Activated T-helper 1 cell treated with anti-CD3 and anti-CD28 coated beads, Interleukin-12 subunit alpha, Interleukin-12 subunit beta, Interleukin-2, Interleukin-4 antibody, amounts not matched to agents 30 ng/mL and 10 ng/mL and 1 ng/mL, durations not matched to agents 14 hours and 24 hours and 36 hours (primary cell): ENCODE measurements at regions of chr11 and their contacts with region 1.

Region 1: DNA sequence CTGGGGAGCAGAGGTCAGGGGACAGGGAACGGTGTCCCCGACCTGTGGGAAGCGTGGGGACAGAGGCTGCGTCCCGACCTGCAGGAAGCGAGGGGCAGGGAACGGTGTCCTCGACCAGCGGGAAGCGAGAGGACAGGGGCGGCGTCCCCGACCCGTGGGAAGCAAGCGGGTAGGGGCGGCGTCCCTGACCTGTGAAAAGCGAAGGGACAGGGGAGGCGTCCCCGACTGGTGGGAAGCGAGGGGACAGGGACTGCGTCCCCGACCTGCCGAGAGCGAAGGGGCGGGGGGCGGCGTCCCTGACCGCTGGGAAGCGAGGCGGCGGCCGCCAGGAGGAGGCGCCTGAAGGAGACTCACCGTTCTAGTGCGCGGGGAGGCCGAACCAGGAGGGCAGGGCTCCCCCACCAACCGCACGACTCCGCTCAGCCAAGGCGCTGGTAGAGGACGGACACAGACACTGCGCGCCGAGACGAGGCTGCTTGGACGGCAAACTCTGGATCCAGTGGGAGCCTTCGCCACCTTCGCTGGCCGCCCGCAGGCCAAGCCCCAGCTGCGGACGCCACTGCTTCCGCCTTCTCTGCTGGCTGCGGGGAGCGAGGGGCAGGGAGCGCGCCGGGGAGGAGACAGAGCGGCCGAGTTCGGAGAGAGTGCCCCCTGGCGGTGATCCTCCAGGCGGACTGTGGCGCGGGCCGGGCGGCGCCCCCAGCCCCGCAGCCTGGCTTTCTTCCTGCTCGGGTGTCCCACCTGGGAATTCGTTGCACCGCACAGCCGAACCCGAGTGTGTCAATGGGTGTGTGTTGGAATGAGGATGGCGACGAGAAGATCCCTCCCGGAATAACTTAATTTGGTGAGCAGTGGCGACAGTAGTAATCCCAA is at the start of gene TRAF6:
- DNase-seq: peak; percentile 83
- H3K4me3 Mint-ChIP-seq: peak within 1 kb of the TSS; percentile 97
- H3K27ac Mint-ChIP-seq: peak within 1 kb of the TSS; percentile 91
- H3K4me1 Mint-ChIP-seq: peaks cover 30% of the 10 kb centered on the region
- H3K27me3 Mint-ChIP-seq: peaks cover 9% of the 10 kb centered on the region
- total RNA-seq, gene TRAF6: 10.5 and 11.1 TPM in 2 replicates

Region 2: GRCh38 chr11:35662649-35663407 is 847.1 kb before region 1 on chr11 and contains the start of gene TRIM44:
- intact Hi-C with region 1: loop called (anchors 2 kb)
- DNase-seq: peak; percentile 79
- H3K4me3 Mint-ChIP-seq: peak within 1 kb of the TSS; percentile 89
- H3K27ac Mint-ChIP-seq: peak within 1 kb of the TSS; percentile 93
- H3K4me1 Mint-ChIP-seq: peaks cover 33% of the 10 kb centered on the region
- H3K27me3 Mint-ChIP-seq: peaks cover 18% of the 10 kb centered on the region
- total RNA-seq, gene TRIM44: 24.3 and 27.6 TPM in 2 replicates

Region 3: DNA sequence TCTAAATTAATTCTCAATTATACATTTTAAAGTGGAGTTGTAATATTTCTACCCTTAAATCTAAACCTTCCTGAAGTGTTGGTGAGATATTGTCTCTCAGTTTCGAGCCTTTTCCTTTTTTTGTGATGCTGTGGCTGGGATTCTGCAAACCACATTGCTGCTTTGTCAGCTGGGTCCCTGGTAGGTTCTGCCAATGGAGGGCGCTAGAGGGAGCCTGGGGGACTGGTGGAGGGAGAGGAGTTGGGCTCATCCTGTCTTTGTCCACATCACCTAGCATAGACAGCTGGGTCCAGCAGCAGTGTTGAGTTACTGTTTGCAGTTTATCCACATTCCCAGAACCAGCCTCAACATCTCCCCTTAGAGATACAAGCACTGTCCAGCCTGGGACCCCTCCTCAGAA is 40.9 kb before region 1 on chr11:
- intact Hi-C with region 1: no loop called
- DNase-seq: no peak
- H3K4me3 Mint-ChIP-seq: no peak overlapping the region
- H3K27ac Mint-ChIP-seq: no peak overlapping the region
- H3K4me1 Mint-ChIP-seq: peaks cover 5% of the 10 kb centered on the region
- H3K27me3 Mint-ChIP-seq: no peaks in the 10 kb centered on the region

Region 4: GRCh38 chr11:36492724-36493304 is 17.1 kb before region 1 on chr11:
- intact Hi-C with region 1: loop called (anchors 1 kb)
- DNase-seq: no peak
- H3K4me3 Mint-ChIP-seq: no peak overlapping the region
- H3K27ac Mint-ChIP-seq: no peak overlapping the region
- H3K4me1 Mint-ChIP-seq: peaks cover 18% of the 10 kb centered on the region
- H3K27me3 Mint-ChIP-seq: no peaks in the 10 kb centered on the region

Region 5: DNA sequence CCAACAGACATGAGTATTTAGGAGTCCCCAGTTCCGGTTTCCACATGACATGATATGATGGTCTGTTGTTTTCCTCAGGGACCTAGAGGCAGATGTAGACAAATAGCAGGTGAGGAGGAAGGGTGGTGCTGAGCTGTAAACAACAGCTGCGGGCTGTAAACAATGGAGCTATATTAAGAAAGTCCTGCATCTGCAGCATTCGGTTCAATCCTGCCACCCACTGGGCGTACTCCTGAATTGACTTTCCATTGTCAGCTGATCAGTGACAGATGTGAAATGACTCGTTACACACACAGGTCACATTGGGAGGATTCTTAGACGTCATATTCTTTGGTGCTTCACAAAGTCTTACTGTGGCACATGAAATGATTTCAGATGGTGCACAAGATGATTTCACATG is 31.1 kb after region 1 on chr11:
- intact Hi-C with region 1: loop called (anchors 1 kb)
- DNase-seq: peak; percentile 40
- H3K4me3 Mint-ChIP-seq: no peak overlapping the region
- H3K27ac Mint-ChIP-seq: no peak overlapping the region
- H3K4me1 Mint-ChIP-seq: peaks cover 7% of the 10 kb centered on the region
- H3K27me3 Mint-ChIP-seq: peaks cover 15% of the 10 kb centered on the region

Region 6: GRCh38 chr11:36558571-36559413 is 48.9 kb after region 1 on chr11:
- intact Hi-C with region 1: loop called (anchors 5 kb)
- DNase-seq: no peak
- H3K4me3 Mint-ChIP-seq: peak overlapping the region; percentile 57
- H3K27ac Mint-ChIP-seq: peak overlapping the region; percentile 88
- H3K4me1 Mint-ChIP-seq: peaks cover 29% of the 10 kb centered on the region
- H3K27me3 Mint-ChIP-seq: peaks cover 13% of the 10 kb centered on the region

Region 7: GRCh38 chr11:36622431-36623136 is 112.7 kb after region 1 on chr11:
- intact Hi-C with region 1: loop called (anchors 1 kb)
- DNase-seq: no peak
- H3K4me3 Mint-ChIP-seq: no peak overlapping the region
- H3K27ac Mint-ChIP-seq: no peak overlapping the region
- H3K4me1 Mint-ChIP-seq: no peaks in the 10 kb centered on the region
- H3K27me3 Mint-ChIP-seq: peaks cover 8% of the 10 kb centered on the region

Region 8: DNA sequence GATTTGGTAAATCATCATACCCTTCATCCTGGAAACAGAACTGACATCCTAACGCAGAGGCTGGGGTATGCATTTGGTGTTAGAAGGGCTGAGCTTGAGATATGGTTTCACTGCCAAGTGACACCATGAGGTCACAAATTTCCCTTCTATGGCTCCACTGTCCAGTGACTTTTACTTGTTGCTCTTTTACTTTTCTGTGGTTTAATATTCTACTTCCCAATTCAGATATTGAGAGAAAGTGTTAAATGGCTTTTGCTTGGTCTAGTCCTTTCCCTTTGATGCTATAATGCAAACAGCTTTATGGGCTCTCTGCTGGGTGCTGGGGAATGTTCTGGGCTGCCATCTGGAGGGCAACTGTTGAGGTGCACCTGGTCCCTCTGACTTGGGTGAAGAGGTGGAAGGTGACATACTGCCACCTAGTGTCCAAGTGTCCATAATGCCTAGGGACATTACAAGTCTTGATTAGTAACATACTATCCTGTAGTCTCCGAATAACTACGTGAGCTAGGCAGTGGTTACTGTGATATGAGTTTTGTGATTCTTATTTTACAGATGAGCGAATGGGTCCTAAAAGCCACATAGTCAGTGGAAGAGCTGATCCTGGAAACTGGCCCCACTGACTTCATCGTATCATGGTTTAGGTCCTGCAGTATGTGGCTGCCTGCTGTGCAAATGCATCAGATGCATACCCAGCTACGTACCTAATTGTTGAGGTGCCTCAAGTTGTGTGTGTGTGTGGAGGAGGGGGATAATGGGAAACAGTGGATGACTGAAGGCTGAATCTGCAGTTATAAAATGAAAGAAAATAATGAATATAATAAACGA is 237.2 kb after region 1 on chr11:
- intact Hi-C with region 1: loop called (anchors 1 kb)
- DNase-seq: peak; percentile 79
- H3K4me3 Mint-ChIP-seq: no peak overlapping the region
- H3K27ac Mint-ChIP-seq: no peak overlapping the region
- H3K4me1 Mint-ChIP-seq: no peaks in the 10 kb centered on the region
- H3K27me3 Mint-ChIP-seq: peaks cover 9% of the 10 kb centered on the region